Caco-2 (cell line): ENCODE measurements at regions of chr22 and their contacts with region 1.

Region 1: GRCh38 chr22:37419969-37420685 is 7.2 kb downstream of the ELFN2 start:
- DNase-seq: peak; percentile 53 to 56
- H3K4me3 ChIP-seq: peak overlapping the region; percentile 46
- H3K4me3 Mint-ChIP-seq: peak overlapping the region; percentile 82
- H3K27ac Mint-ChIP-seq: peak overlapping the region; percentile 18
- H3K4me1 ChIP-seq: no peaks in the 10 kb centered on the region
- H3K4me1 Mint-ChIP-seq: no peaks in the 10 kb centered on the region
- H3K27me3 ChIP-seq: no peaks in the 10 kb centered on the region
- H3K27me3 Mint-ChIP-seq: no peaks in the 10 kb centered on the region
- CTCF ChIP-seq: no peak

Region 2: GRCh38 chr22:37244922-37245722 is 175.0 kb before region 1 on chr22:
- CTCF ChIA-PET with region 1: no interaction called
- POLR2A ChIA-PET with region 1: interaction called, 13 read pairs
- intact Hi-C with region 1: no loop called
- DNase-seq: peak in 1 of 2 experiments; percentile 14
- H3K4me3 ChIP-seq: no peak overlapping the region
- H3K4me3 Mint-ChIP-seq: no peak overlapping the region
- H3K27ac Mint-ChIP-seq: no peak overlapping the region
- H3K4me1 ChIP-seq: no peaks in the 10 kb centered on the region
- H3K4me1 Mint-ChIP-seq: no peaks in the 10 kb centered on the region
- H3K27me3 ChIP-seq: no peaks in the 10 kb centered on the region
- H3K27me3 Mint-ChIP-seq: peaks cover 2% of the 10 kb centered on the region
- CTCF ChIP-seq: no peak

Region 3: DNA sequence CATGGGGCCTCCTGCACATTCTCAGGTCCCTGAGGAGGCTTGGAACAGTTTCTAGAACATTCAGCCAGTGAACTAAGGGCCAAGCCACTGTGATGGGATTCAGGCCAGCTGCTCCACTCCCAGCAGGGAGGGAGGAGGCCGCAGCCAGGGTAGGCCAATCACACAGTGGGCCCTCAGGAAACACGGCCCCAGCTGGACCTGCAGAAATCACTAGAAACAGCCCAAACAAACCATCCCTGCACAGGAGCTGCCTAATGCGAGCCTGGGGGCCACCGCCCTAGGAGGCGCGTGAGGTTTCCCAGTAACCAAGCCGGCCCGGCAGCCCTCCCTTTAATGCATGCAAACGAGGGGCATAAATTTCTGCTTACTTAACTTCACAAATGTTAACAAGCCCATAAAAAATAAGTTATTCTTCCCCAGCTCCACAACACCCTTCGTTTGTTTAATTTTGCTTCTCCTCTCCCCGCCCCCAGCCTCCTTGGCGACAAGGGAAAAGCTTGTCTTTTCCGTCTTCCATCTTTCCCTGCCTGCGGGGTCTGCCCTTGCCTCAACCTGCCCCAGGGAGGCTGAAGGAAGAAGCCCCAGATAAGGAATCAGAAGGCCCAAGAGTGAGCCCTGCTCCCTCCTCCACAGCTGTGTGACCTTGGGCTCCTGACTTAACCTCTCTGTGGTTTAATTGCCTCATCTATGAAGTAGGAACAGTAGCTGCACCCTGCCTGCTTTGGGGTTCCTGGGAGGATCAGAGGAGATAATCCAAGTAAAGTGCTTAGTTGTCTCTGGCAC is 18.5 kb before region 1 on chr22:
- CTCF ChIA-PET with region 1: no interaction called
- POLR2A ChIA-PET with region 1: no interaction called
- intact Hi-C with region 1: no loop called
- DNase-seq: no peak
- H3K4me3 ChIP-seq: no peak overlapping the region
- H3K4me3 Mint-ChIP-seq: no peak overlapping the region
- H3K27ac Mint-ChIP-seq: no peak overlapping the region
- H3K4me1 ChIP-seq: peaks cover 14% of the 10 kb centered on the region; the same call in 1 of the 2 replicates
- H3K4me1 Mint-ChIP-seq: no peaks in the 10 kb centered on the region
- H3K27me3 ChIP-seq: no peaks in the 10 kb centered on the region
- H3K27me3 Mint-ChIP-seq: no peaks in the 10 kb centered on the region
- CTCF ChIP-seq: no peak

Region 4: DNA sequence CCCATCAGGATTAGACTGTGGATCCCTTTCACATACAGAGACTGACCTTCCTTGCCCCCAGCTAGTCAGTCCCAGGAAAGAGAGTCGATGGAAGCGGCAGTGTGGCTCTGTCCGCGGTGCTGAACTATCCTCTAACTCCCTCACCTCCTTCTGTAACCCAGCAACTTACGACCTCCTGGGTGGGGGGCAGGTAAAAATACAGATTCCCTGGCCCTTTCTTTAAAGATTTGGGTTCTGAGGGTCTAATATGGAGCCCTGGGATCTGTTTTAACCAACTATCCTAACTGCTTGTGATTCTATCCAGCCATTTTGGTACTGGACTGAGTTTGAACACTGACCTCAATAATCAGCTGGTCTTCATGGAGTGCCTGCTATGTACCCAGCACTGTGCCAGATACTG is 42.9 kb after region 1 on chr22:
- CTCF ChIA-PET with region 1: no interaction called
- POLR2A ChIA-PET with region 1: no interaction called
- intact Hi-C with region 1: no loop called
- DNase-seq: peak in 1 of 2 experiments; percentile 66
- H3K4me3 ChIP-seq: no peak overlapping the region
- H3K4me3 Mint-ChIP-seq: no peak overlapping the region
- H3K27ac Mint-ChIP-seq: no peak overlapping the region
- H3K4me1 ChIP-seq: no peaks in the 10 kb centered on the region
- H3K4me1 Mint-ChIP-seq: no peaks in the 10 kb centered on the region
- H3K27me3 ChIP-seq: no peaks in the 10 kb centered on the region
- H3K27me3 Mint-ChIP-seq: no peaks in the 10 kb centered on the region
- CTCF ChIP-seq: no peak